ENCODE measurements at regions of chr13 and their contacts with region 1.

Region 1: DNA sequence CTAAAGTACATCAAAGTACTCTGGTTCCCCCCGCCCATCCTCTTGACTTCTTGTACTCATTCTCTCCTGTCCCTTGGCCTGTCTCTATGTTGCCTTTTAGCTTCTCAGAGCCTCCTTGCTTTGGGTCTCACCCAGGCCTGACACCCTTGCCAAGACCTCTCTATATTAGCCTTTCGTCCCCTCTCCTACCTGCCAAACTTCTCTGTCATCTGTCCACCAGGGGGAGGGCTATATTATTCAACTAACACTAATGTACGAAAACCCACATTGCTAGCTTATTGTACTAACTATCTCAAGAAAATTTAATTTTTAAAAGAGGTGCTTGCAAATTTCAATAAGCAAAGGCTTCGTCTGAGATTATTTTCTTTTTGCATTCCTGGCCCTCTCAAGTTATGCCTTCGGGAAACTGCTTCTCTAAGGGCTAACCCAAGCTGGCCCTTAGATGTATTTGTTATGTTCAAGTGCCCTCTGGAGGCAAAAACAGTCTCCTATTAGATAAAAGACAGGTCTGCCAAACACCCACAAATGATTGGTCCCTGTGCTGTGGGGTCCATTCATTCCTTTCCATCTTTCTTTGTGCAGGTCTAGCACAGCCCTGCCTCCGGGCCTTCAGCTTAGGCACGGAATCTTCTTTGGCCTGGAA is 6.3 kb upstream of the MRPS31 start:
- DNase-seq: peak; percentile 47
- H3K4me3 ChIP-seq: peak overlapping the region in 1 of 3 experiments; percentile 24
- H3K27ac ChIP-seq: no peak overlapping the region
- H3K4me1 ChIP-seq: peaks cover 6% of the 10 kb centered on the region
- H3K27me3 ChIP-seq: no peaks in the 10 kb centered on the region
- CTCF ChIP-seq: peak; percentile 42 to 56

Region 2: DNA sequence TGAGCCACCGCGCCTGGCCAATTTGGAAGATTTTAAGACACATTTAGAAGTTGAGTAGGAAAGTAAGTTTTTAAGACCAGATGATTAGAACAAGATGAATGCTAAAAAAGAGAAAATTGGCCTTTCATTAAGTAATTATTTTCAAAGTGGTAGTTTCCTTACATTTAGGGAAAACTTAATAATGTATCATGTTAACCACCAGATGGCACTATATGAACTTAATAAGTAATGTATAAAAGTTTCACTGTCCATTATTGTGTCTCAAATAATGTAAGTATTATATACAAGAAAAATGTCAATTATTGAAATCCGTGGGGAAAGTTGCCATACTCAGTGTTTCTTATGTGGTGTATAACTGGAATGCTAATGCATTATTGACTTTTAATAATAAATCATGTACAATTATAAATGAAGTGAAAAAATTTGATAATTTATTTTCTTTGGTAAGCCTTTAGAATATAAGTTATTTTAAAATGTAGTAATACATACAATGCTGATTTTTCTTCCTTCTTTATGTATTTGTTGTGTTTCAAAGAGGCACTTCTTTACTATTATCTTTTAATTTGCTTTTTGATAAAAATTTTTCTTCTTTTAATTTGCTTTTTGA is 1092.7 kb before region 1 on chr13:
- CTCF ChIA-PET with region 1: no interaction called
- dilution Hi-C with region 1: no loop called
- in situ Hi-C with region 1: no loop called
- intact Hi-C with region 1: loop called (anchors 1 kb)
- DNase-seq: peak; percentile 16
- H3K4me3 ChIP-seq: no peak overlapping the region
- H3K27ac ChIP-seq: no peak overlapping the region
- H3K4me1 ChIP-seq: no peaks in the 10 kb centered on the region
- H3K27me3 ChIP-seq: no peaks in the 10 kb centered on the region
- CTCF ChIP-seq: peak; percentile 21 to 25

Region 3: GRCh38 chr13:39777527-39778061 is 999.7 kb before region 1 on chr13:
- CTCF ChIA-PET with region 1: no interaction called
- dilution Hi-C with region 1: no loop called
- in situ Hi-C with region 1: no loop called
- intact Hi-C with region 1: loop called (anchors 5 kb)
- DNase-seq: peak; percentile 92
- H3K4me3 ChIP-seq: no peak overlapping the region
- H3K27ac ChIP-seq: no peak overlapping the region
- H3K4me1 ChIP-seq: peaks cover 15% of the 10 kb centered on the region
- H3K27me3 ChIP-seq: no peaks in the 10 kb centered on the region
- CTCF ChIP-seq: peak; percentile 56 to 69

Region 4: DNA sequence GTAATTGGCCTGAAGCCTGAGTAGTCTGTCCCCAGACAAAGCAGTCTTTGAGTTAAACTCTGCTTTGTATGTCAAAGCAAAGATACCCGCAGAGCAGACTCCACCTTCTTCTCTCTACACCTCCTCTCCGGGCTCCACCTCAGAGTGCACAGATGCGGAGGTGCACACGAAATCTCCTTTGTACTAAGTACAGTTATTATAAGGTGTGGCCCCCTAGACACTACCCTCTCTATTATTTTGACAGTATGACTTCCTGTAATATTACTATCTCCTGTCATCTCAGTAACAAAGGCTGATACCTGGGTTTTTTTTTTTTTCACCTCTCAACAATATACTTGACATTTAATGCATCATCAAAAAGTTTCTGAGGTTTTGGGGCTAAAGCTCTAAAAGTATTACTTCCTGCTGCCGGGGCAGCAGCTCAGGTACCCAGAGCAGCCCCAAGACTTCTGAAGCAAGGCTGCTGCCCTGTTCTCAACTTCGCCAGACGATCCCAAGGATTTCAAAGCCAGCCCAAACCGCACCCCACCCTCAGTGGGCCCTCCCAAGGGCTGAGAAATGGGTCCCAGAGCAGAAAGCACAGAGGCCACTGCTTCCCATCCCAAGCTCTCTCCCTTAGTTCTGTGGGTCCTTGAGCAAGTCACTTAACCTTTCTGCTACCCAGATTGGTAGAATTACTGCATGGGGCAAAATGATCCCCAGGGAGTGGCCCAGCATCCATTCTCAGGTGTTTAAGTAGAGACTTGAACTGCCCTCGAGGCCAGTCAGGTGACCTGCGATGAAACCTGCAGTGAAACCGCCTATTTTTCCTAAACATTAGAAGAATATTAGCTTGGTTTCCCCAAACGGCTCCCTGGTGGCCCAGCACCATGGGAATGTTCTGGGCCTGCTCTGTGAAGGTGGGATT is 291.4 kb before region 1 on chr13:
- CTCF ChIA-PET with region 1: no interaction called
- dilution Hi-C with region 1: no loop called
- in situ Hi-C with region 1: no loop called
- intact Hi-C with region 1: no loop called
- DNase-seq: no peak
- H3K4me3 ChIP-seq: no peak overlapping the region
- H3K27ac ChIP-seq: no peak overlapping the region
- H3K4me1 ChIP-seq: peaks cover 2% of the 10 kb centered on the region
- H3K27me3 ChIP-seq: no peaks in the 10 kb centered on the region
- CTCF ChIP-seq: no peak

Region 5: GRCh38 chr13:41029629-41030028 is 252.3 kb after region 1 on chr13:
- CTCF ChIA-PET with region 1: interaction called, 10 read pairs
- dilution Hi-C with region 1: no loop called
- in situ Hi-C with region 1: no loop called
- intact Hi-C with region 1: no loop called
- DNase-seq: no peak
- H3K4me3 ChIP-seq: no peak overlapping the region
- H3K27ac ChIP-seq: no peak overlapping the region
- H3K4me1 ChIP-seq: no peaks in the 10 kb centered on the region
- H3K27me3 ChIP-seq: no peaks in the 10 kb centered on the region
- CTCF ChIP-seq: peak; percentile 17 to 20